WTC11 (cell line): ENCODE measurements at regions of chr12 and their contacts with region 1.

Region 1: GRCh38 chr12:89345830-89346740 is 6.2 kb downstream of the DUSP6 start:
- DNase-seq: peak; percentile 73
- ATAC-seq: peak; percentile 75
- H3K4me3 Mint-ChIP-seq: peak overlapping the region; percentile 97
- H3K27ac Mint-ChIP-seq: peak overlapping the region; percentile 81
- H3K4me1 Mint-ChIP-seq: peaks cover 68% of the 10 kb centered on the region
- H3K27me3 Mint-ChIP-seq: peaks cover 6% of the 10 kb centered on the region
- CTCF ChIP-seq: no peak

Region 2: DNA sequence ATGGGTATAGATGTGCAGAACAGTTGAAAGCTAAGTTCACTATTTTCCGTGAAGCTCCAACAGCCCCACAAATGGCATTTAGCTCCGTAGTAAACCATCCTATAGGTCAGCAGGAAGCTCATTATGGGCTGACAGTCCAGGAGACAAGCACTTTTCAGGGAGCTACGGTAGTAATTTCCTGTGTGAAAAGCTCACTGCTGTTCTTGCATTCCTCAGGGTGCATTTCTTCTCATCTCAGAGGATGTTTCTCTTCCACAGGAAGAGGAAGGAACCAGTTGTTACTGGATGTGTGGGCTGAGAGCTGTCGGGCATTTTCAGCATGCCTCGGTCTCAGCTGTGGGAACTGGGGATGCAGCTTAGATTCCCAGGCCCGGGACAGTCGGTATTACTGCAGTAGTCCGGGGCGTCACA is 105.8 kb after region 1 on chr12:
- CTCF ChIA-PET with region 1: interaction called, 20 read pairs
- POLR2A ChIA-PET with region 1: interaction called, 83 read pairs
- DNase-seq: peak; percentile 70
- ATAC-seq: peak; percentile 89
- H3K4me3 Mint-ChIP-seq: peak overlapping the region; percentile 51
- H3K27ac Mint-ChIP-seq: peak overlapping the region; percentile 96
- H3K4me1 Mint-ChIP-seq: peaks cover 71% of the 10 kb centered on the region
- H3K27me3 Mint-ChIP-seq: no peaks in the 10 kb centered on the region
- CTCF ChIP-seq: no peak

Region 3: DNA sequence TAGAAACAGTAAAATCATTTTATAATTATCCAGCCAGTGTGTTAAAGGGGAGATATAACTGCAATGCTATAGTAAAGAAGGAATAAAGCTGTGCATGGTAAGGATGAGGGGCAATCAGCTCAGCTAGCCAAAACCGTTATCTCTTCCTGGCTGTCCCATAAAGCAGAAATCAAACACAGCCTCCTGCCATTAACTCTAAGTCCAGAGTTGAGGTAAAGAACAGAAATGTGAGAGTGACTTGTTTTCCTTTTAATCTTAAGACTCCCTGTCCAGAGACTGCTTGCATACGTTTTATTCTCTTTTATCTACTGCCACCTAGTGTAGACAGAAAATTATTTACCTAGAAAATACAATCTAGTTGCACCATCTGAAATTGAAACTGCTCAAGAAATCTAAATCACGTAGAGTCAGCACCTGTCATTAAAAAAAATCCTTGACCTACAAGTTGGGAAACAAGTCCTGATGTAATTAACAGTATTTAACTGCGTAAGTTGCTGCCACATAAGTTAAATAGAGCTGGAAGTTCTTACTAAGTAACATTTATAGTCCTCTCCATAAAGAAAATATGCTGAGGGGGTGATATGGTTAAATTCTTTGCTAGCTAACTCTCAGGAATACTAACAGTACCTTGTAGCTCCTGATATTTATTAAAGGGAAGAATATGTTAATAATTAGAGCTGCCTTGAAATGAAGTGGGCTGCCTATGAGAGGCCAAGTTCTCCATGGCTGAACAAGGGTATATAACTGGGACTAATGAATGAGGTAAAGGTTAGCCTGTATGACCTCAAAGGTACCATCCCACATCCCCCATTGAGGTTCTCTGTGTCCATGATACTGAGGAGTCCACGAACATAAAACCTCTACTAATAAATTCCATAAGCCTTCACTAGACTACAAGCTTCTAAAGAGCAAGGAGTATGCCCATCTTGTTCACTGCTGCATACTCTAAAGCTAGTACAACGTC is 115.8 kb after region 1 on chr12:
- CTCF ChIA-PET with region 1: interaction called, 13 read pairs
- POLR2A ChIA-PET with region 1: interaction called, 4 read pairs
- DNase-seq: no peak
- ATAC-seq: peak; percentile 70
- H3K4me3 Mint-ChIP-seq: no peak overlapping the region
- H3K27ac Mint-ChIP-seq: no peak overlapping the region
- H3K4me1 Mint-ChIP-seq: peaks cover 25% of the 10 kb centered on the region
- H3K27me3 Mint-ChIP-seq: no peaks in the 10 kb centered on the region
- CTCF ChIP-seq: peak; percentile 49